ENCODE measurements at regions of chr16 and their contacts with region 1.

Region 1: GRCh38 chr16:1610276-1611017 is 1.4 kb downstream of the IFT140 start:
- DNase-seq: peak; percentile 41
- ATAC-seq: peak; percentile 82
- H3K4me3 ChIP-seq: peak overlapping the region; percentile 71
- H3K27ac ChIP-seq: no peak overlapping the region
- H3K4me1 ChIP-seq: peaks cover 20% of the 10 kb centered on the region
- H3K27me3 ChIP-seq: peaks cover 0 to 4% of the 10 kb centered on the region in 2 experiments; a peak in 1 of 4 replicates
- CTCF ChIP-seq: no peak
- EP300 ChIP-seq: no peak
- POLR2A ChIP-seq: 0 out of 2 replicates have a peak, but pooled peaks have one; percentile 42
- RAD21 ChIP-seq: no peak

Region 2: GRCh38 chr16:1351582-1352362 is 258.7 kb before region 1 on chr16 and contains the starts of genes GNPTG and TSR3:
- CTCF ChIA-PET with region 1: no interaction called
- POLR2A ChIA-PET with region 1: no interaction called
- RAD21 ChIA-PET with region 1: no interaction called
- SMC1A ChIA-PET with region 1: no interaction called
- in situ Hi-C with region 1: no loop called
- intact Hi-C with region 1: no loop called
- DNase-seq: peak; percentile 64
- ATAC-seq: peak; percentile 98
- H3K4me3 ChIP-seq: peak within 1 kb of the TSS; percentile 81
- H3K27ac ChIP-seq: peak within 1 kb of the TSS; percentile 59
- H3K4me1 ChIP-seq: peaks cover 8% of the 10 kb centered on the region
- H3K27me3 ChIP-seq: no peaks in the 10 kb centered on the region
- CTCF ChIP-seq: no peak
- EP300 ChIP-seq: peak in 1 of 2 experiments; percentile 59; a peak in 1 of 4 replicates
- POLR2A ChIP-seq: peak; percentile 84; the same call in 1 of the 2 replicates
- RAD21 ChIP-seq: 0 out of 2 replicates have a peak, but pooled peaks have one; percentile 8
- polyA plus RNA-seq, gene GNPTG: 0.80 to 2.4 TPM
- polyA plus RNA-seq, gene TSR3: 3.4 to 11.2 TPM

Region 3: DNA sequence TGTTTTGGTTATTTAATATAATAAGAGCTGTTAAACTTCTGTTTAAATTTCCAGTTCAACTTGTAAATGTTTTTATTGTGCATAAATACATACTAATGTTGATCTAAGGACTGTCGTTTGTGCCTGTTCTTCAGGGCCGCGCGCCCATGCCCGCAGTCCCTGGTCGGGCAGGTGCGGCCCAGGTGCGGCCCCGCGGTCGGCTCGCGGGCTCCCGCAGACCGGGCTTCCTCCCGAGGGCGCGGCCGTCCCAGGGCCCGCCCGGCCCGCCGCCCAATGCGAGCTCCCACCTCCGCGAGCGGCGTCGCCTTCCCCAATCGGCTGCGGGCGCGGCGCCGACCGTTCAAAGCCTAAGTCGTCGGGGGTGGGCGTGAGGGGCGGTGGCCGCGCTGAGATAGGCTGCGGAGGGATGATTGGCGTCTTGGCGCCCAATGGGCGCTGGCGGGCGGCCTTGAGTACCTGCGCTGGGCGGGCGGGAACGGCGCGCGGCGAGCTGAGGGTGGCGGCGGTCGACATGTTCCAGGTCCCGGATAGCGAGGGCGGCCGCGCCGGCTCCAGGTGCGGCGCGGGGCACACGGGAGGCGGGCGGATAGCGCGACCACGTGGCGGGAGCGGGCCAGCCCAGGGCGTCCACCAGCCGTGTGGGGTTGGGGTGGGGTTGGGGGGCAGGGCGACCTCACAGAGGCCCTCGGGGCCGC is 67.5 kb after region 1 on chr16 and contains the start of gene JPT2:
- CTCF ChIA-PET with region 1: no interaction called
- POLR2A ChIA-PET with region 1: interaction called, 4 read pairs
- RAD21 ChIA-PET with region 1: no interaction called
- SMC1A ChIA-PET with region 1: no interaction called
- in situ Hi-C with region 1: no loop called
- intact Hi-C with region 1: loop called (anchors 5 kb)
- DNase-seq: peak; percentile 84
- ATAC-seq: peak; percentile 99
- H3K4me3 ChIP-seq: peak within 1 kb of the TSS; percentile 75
- H3K27ac ChIP-seq: peak within 1 kb of the TSS; percentile 76
- H3K4me1 ChIP-seq: no peaks in the 10 kb centered on the region; the same call in 1 of the 2 replicates
- H3K27me3 ChIP-seq: no peaks in the 10 kb centered on the region
- CTCF ChIP-seq: 0 out of 6 replicates have a peak, but pooled peaks of 1 of the 3 experiments have one; percentile 5
- EP300 ChIP-seq: no peak
- POLR2A ChIP-seq: peak; percentile 85
- RAD21 ChIP-seq: no peak
- polyA plus RNA-seq, gene JPT2: 15.6 to 26.7 TPM

Region 4: GRCh38 chr16:1691276-1691675 is 80.8 kb after region 1 on chr16:
- CTCF ChIA-PET with region 1: no interaction called
- POLR2A ChIA-PET with region 1: no interaction called
- RAD21 ChIA-PET with region 1: no interaction called
- SMC1A ChIA-PET with region 1: no interaction called
- in situ Hi-C with region 1: no loop called
- intact Hi-C with region 1: no loop called
- DNase-seq: no peak
- ATAC-seq: no peak
- H3K4me3 ChIP-seq: no peak overlapping the region
- H3K27ac ChIP-seq: no peak overlapping the region
- H3K4me1 ChIP-seq: no peaks in the 10 kb centered on the region
- H3K27me3 ChIP-seq: no peaks in the 10 kb centered on the region
- CTCF ChIP-seq: no peak; a peak in 1 of 6 replicates
- EP300 ChIP-seq: no peak
- POLR2A ChIP-seq: no peak
- RAD21 ChIP-seq: no peak